BJ (cell line): ENCODE measurements at regions of chr1 and their contacts with region 1.

Region 1: GRCh38 chr1:111507411-111508201 is 4.2 kb upstream of the ADORA3 start:
- DNase-seq: no peak
- H3K4me3 ChIP-seq: no peak overlapping the region
- H3K27me3 ChIP-seq: no peaks in the 10 kb centered on the region; the same call in 1 of the 2 replicates
- CTCF ChIP-seq: peak; percentile 33

Region 2: GRCh38 chr1:111436726-111437125 is 70.9 kb before region 1 on chr1:
- CTCF ChIA-PET with region 1: no interaction called
- POLR2A ChIA-PET with region 1: no interaction called
- DNase-seq: peak; percentile 21
- H3K4me3 ChIP-seq: no peak overlapping the region
- H3K27me3 ChIP-seq: no peaks in the 10 kb centered on the region
- CTCF ChIP-seq: no peak

Region 3: DNA sequence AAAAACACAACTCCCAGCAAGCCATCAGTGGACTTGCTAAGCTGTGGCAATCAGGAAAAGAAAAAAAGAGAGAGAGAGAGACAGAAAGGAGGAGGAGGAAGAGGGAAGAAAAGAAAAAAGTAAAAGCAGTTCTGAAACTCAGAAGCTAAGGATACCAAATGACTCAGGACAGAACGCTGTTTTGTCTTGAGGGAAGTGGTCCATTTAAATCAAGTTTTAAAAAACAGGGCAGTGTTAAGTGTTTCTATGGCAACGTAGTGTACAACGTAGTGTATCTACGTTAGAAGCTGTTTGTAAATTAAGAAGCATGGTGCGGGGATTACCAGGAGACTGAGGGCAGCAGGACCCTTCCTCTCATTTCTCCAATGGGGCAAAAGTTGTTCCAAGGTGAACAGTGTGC is 10.0 kb before region 1 on chr1:
- CTCF ChIA-PET with region 1: interaction called, 36 read pairs
- POLR2A ChIA-PET with region 1: no interaction called
- DNase-seq: no peak
- H3K4me3 ChIP-seq: no peak overlapping the region
- H3K27me3 ChIP-seq: no peaks in the 10 kb centered on the region; the same call in 1 of the 2 replicates
- CTCF ChIP-seq: no peak

Region 4: DNA sequence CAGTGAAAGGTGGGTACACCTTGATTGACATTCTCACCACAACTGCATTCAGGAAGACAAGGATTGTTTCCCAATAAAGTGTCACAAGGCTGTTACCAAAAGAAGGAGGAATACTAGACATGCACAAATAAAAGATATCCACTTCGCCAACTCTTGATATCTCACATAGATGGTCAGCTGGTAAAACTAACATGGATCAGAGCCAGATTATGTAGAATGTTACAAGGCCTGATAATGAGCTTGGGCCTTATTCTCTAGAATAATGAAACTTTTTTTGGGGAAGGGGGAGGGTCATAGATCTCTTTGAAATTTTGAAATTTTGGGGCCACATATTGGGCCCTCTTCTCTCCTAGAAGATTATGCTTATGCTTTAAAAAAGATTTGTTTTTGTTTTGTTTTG is 136.9 kb after region 1 on chr1:
- CTCF ChIA-PET with region 1: interaction called, 10 read pairs
- POLR2A ChIA-PET with region 1: no interaction called
- DNase-seq: no peak
- H3K4me3 ChIP-seq: no peak overlapping the region
- H3K27me3 ChIP-seq: no peaks in the 10 kb centered on the region
- CTCF ChIP-seq: no peak

Region 5: GRCh38 chr1:111716333-111716732 is 208.7 kb after region 1 on chr1:
- CTCF ChIA-PET with region 1: interaction called, 24 read pairs
- POLR2A ChIA-PET with region 1: no interaction called
- DNase-seq: no peak
- H3K4me3 ChIP-seq: no peak overlapping the region
- H3K27me3 ChIP-seq: no peaks in the 10 kb centered on the region
- CTCF ChIP-seq: no peak

Region 6: DNA sequence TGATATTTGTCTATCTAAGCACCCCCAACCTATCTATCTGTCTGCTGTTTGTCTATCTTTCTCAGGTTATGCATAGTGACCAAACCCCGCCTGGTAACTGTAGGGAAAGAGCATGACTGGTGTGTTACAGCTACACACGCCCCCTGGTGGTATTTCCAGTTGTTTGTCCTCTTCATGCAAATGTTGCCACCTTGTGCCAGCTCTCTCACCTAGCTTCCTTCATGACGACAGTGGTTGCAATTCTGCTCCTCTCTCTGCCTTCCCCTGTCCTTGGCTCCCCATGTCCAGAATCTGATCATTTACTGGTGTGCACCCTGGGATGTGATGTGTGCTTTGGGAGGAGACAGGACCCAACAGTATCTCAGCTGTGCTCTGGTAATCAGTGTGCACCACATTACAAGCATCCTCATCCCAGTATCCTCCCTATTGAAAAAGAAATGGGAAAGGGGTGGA is 239.7 kb after region 1 on chr1:
- CTCF ChIA-PET with region 1: interaction called, 14 read pairs
- POLR2A ChIA-PET with region 1: no interaction called
- DNase-seq: no peak
- H3K4me3 ChIP-seq: no peak overlapping the region
- H3K27me3 ChIP-seq: no peaks in the 10 kb centered on the region
- CTCF ChIP-seq: peak; percentile 61

Region 7: DNA sequence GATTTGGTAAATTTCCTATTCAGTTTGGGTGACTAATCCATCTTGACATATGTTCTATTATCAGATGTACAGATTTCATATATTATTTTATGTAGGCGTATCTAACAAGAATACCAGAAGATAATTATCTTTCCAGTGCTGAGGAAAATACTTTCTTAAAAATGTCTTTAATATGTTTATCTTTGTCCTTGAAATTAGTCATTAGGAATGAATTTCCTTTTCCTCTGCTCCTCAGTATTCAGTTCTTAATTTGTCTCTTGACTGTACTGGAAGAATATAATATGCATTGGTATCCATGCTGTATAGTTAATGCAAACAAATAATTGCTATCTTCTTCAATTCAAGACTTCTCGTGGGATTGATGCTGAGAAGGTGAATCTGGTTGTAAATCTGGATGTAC is 254.7 kb after region 1 on chr1:
- CTCF ChIA-PET with region 1: interaction called, 24 read pairs
- POLR2A ChIA-PET with region 1: interaction called, 3 read pairs
- DNase-seq: no peak
- H3K4me3 ChIP-seq: no peak overlapping the region
- H3K27me3 ChIP-seq: no peaks in the 10 kb centered on the region
- CTCF ChIP-seq: no peak